Breast epithelium (tissue), 4 donors: ENCODE measurements at regions of chr20 and their contacts with region 1.

Region 1: DNA sequence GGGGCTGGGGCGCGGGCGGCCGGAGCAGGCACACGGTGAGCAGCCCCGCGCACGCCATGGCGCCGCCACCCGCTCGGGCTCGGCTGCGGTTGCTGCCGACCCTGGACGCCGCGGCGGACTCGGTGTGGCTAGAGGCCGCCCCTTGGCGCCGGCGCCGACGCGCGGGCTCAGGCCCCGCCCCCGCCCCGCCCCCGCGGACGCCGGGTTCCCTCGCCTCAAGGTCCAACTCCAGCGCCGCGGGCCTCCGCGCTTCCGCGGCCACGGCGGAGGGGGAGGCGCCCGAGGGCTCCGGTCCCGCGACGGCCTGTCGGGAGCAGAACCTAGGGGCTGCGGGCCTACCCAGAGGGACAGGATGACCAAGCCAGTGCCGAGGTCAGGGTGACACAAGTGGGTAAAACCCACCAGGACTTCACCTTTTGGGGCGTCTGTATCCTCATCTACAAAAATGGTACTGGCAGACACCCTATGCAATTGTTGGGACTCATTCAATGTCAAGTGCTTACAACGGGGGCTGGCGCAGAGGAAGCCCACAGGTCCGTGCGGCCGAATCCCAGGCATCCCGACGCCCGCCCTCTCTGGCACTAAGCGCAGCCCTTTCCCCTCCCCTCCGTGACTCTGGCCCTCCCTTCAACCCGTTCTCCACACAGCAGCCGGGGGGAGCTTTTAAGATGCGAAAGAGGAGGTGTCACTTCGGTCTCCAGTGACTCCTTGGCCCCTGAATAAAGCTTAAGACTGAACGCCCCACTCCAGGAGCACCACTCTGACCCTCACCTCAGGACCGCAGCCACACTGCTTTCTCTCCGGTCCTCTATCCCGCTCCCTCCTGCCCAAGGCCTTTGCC is at the start of gene NECAB3:
- DNase-seq: peak in 1 of 2 donors; percentile 74
- H3K4me3 ChIP-seq: peak within 1 kb of the TSS; percentile 67 to 78 (median 73)
- H3K27ac ChIP-seq: peak within 1 kb of the TSS; percentile 84 to 93
- H3K4me1 ChIP-seq: peaks cover 0 to 4% of the 10 kb centered on the region in 2 donors
- H3K27me3 ChIP-seq: no peaks in the 10 kb centered on the region
- CTCF ChIP-seq: no peak
- POLR2A ChIP-seq: no peak
- total RNA-seq, gene NECAB3: 23.4 to 37.3 (median 28.5) TPM

Region 2: GRCh38 chr20:32091888-32092346 is 1582.6 kb before region 1 on chr20:
- intact Hi-C with region 1: no loop called
- DNase-seq: peak; percentile 41 to 77
- H3K4me3 ChIP-seq: no peak overlapping the region
- H3K27ac ChIP-seq: no peak overlapping the region
- H3K4me1 ChIP-seq: no peaks in the 10 kb centered on the region
- H3K27me3 ChIP-seq: no peaks in the 10 kb centered on the region
- CTCF ChIP-seq: peak; percentile 27 to 60 (median 51)
- POLR2A ChIP-seq: no peak

Region 3: DNA sequence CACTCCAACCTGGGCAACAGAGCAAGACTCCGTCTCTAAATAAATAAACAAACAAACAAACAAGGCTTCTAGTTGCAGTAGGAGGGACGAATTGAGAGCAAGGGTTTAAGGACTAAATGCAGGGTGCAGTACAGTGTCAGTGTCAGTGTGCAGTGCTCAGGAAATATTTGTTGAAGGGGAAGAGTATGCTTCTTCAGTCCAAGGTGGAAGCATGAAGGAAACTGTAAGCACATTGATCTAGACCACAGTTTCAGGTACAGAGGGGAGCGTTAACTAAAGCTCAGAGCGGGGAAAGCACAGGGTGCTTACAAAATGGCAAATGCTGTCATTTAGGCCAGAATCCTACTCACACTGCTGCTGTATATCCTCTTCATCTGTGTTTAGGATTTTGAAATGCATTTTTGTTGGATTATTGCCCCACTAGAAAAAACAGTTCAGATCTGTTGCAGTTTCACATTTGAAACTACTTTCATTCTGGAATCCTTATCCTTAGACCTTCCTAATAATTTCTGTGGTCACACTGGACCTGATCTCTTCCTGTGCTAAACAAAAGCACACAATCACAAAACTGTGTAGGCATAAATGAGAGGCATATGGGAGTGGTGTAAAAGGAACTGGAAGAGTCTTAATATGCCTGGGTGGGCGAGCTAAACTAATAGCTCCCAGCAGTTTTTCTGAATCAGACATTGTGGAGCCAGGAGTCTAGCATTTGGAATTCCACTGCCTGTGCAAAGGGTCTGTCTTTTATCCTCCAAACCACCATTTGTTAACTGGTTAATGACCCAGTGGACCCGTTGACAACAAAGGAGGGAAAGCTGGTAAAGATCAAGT is 143.3 kb before region 1 on chr20:
- intact Hi-C with region 1: no loop called
- DNase-seq: no peak
- H3K4me3 ChIP-seq: no peak overlapping the region
- H3K27ac ChIP-seq: peak overlapping the region in 1 of 2 donors; percentile 34
- H3K4me1 ChIP-seq: no peaks in the 10 kb centered on the region
- H3K27me3 ChIP-seq: no peaks in the 10 kb centered on the region
- CTCF ChIP-seq: no peak
- POLR2A ChIP-seq: no peak

Region 4: GRCh38 chr20:33653218-33653899 is 21.2 kb before region 1 on chr20:
- intact Hi-C with region 1: no loop called
- DNase-seq: no peak
- H3K4me3 ChIP-seq: peak overlapping the region in 2 of 3 donors; percentile 20 to 46
- H3K27ac ChIP-seq: peak overlapping the region; percentile 50 to 58
- H3K4me1 ChIP-seq: peaks cover 0 to 5% of the 10 kb centered on the region in 2 donors
- H3K27me3 ChIP-seq: no peaks in the 10 kb centered on the region
- CTCF ChIP-seq: peak; percentile 34 to 80 (median 58)
- POLR2A ChIP-seq: no peak

Region 5: GRCh38 chr20:33733654-33734576 is 59.4 kb after region 1 on chr20:
- intact Hi-C with region 1: loop called (anchors 2 kb)
- DNase-seq: peak in 1 of 2 donors; percentile 48
- H3K4me3 ChIP-seq: peak overlapping the region in 1 of 3 donors; percentile 22
- H3K27ac ChIP-seq: peak overlapping the region; percentile 84 to 94
- H3K4me1 ChIP-seq: peaks cover 0 to 11% of the 10 kb centered on the region in 2 donors
- H3K27me3 ChIP-seq: no peaks in the 10 kb centered on the region
- CTCF ChIP-seq: no peak
- POLR2A ChIP-seq: no peak